Heart left ventricle (tissue), 16 donors: ENCODE measurements at regions of chr9 and their contacts with region 1.

Region 1: DNA sequence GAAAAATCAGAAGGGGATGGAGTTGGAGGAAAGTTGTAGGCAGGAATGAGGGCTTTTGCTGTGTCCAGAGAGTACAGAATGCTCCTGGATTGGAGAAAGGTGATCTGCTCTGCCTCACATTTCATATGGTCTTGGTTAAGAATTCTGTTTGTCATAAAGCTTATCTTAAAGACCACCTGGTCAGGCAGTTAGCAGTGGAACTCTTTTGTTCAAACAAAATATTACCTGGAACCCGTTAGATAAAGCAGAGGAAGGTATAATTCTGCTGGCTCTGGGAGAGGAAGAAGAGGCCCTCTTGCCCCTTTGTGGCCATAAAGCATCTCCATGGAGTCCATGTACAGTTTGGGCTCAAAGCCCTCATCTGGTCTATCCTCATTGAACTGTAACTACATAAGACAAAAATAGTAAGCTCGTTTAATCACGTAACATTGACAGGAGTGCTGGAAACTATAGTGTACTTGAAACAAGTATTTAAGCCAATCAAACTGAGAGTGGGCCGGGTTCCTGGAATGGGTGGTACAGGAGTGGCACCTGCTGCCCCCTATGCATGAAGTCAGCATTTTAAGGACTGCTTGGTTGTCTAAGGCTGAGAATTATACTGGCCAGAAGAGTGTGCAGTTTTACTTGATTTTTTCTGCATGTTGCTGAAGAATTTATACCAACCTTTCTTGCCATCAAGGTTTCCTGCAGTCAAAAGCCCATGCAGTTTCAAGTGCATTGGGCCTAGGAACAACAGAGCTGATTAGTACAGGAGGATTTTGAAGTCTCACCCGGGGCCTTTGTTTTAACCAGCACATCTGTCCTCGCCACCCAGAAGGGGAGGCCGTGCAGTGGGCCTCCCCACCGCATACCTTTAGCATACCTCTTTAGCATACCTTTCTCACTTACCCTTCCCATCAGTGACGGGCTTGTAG is 39.9 kb downstream of the STXBP1 start:
- DNase-seq: no peak
- ATAC-seq: peak in 3 of 4 donors; percentile 28 to 82 (median 37)
- H3K4me3 ChIP-seq: no peak overlapping the region
- H3K27ac ChIP-seq: peak overlapping the region in 1 of 12 donors; percentile 4
- H3K4me1 ChIP-seq: peaks cover 0 to 10% (median 1%) of the 10 kb centered on the region in 12 donors
- H3K27me3 ChIP-seq: no peaks in the 10 kb centered on the region
- CTCF ChIP-seq: no peak
- POLR2A ChIP-seq: no peak

Region 2: GRCh38 chr9:127004946-127005769 is 646.8 kb before region 1 on chr9:
- intact Hi-C with region 1: no loop called
- DNase-seq: no peak
- ATAC-seq: peak in 3 of 4 donors; percentile 30 to 60 (median 59)
- H3K4me3 ChIP-seq: no peak overlapping the region
- H3K27ac ChIP-seq: peak overlapping the region in 1 of 12 donors; percentile 44
- H3K4me1 ChIP-seq: peaks cover 0 to 16% (median 9%) of the 10 kb centered on the region in 12 donors
- H3K27me3 ChIP-seq: no peaks in the 10 kb centered on the region
- CTCF ChIP-seq: no peak
- POLR2A ChIP-seq: no peak

Region 3: GRCh38 chr9:127568971-127569885 is 82.7 kb before region 1 on chr9:
- intact Hi-C with region 1: no loop called
- DNase-seq: peak; percentile 80 to 92 (median 87)
- ATAC-seq: peak; percentile 79 to 92 (median 90)
- H3K4me3 ChIP-seq: peak overlapping the region; percentile 69 to 99 (median 82)
- H3K27ac ChIP-seq: peak overlapping the region; percentile 87 to 96 (median 90)
- H3K4me1 ChIP-seq: peaks cover 0 to 66% (median 37%) of the 10 kb centered on the region in 12 donors
- H3K27me3 ChIP-seq: no peaks in the 10 kb centered on the region
- CTCF ChIP-seq: no peak
- POLR2A ChIP-seq: peak in 1 of 2 donors; percentile 60

Region 4: GRCh38 chr9:127611899-127612790 is 39.8 kb before region 1 on chr9 and contains the start of gene STXBP1:
- intact Hi-C with region 1: loop called in 1 of 10 experiments (anchors 10 kb)
- DNase-seq: peak; percentile 90 to 95 (median 92)
- ATAC-seq: peak; percentile 71 to 90 (median 86)
- H3K4me3 ChIP-seq: peak within 1 kb of the TSS; percentile 68 to 99 (median 93)
- H3K27ac ChIP-seq: peak within 1 kb of the TSS; percentile 85 to 98 (median 94)
- H3K4me1 ChIP-seq: peaks cover 0 to 47% (median 35%) of the 10 kb centered on the region in 12 donors
- H3K27me3 ChIP-seq: peaks cover 0 to 5% (median 0%) of the 10 kb centered on the region in 9 donors
- CTCF ChIP-seq: peak in 6 of 12 donors; percentile 9 to 50 (median 27)
- POLR2A ChIP-seq: peak in 1 of 2 donors; percentile 91
- total RNA-seq, gene STXBP1: 35.9 to 102 (median 50.2) TPM

Region 5: DNA sequence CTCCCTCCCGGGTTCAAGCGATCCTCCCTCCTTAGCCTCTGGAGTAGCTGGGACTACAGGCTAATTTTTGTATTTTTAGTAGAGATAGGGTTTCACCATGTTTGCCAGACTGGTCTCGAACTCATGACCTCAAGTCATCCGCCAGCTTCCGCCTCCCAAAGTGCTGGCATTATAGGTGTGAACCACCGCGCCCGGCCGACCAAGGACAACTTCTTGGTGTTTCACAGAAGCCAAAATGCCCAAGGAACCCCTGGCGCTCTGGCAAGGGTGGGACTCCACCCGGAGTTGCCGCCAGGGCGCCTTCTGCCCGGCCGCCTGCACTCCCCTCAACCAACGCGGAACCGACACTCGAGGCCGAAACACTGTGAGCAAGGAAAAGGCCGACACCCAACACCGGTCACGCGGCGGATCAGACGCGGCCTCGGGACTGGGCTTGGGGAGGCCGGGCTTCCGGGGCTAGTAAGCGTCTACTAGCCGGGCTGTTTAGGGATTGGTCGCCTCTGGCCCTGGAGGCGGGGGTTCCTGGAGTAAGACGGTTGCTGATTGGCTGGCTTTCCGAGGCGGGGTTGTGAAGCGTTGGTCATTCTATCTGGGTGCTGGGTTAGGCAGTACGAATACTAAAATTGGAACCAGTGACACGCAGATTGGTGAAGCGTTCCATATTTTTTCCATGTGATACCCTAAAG is 47.2 kb after region 1 on chr9:
- intact Hi-C with region 1: loop called in 1 of 10 experiments (anchors 5 kb)
- DNase-seq: peak; percentile 97 to 99 (median 98)
- ATAC-seq: peak; percentile 99
- H3K4me3 ChIP-seq: peak overlapping the region in 9 of 12 donors; percentile 23 to 49 (median 38)
- H3K27ac ChIP-seq: peak overlapping the region; percentile 26 to 92 (median 87)
- H3K4me1 ChIP-seq: peaks cover 0 to 14% (median 8%) of the 10 kb centered on the region in 12 donors
- H3K27me3 ChIP-seq: no peaks in the 10 kb centered on the region
- CTCF ChIP-seq: peak in 4 of 12 donors; percentile 16 to 29 (median 24)
- POLR2A ChIP-seq: peak in 1 of 2 donors; percentile 67

Region 6: GRCh38 chr9:127715394-127716337 is 63.7 kb after region 1 on chr9 and contains the starts of genes PTRH1 and TTC16:
- intact Hi-C with region 1: no loop called
- DNase-seq: peak; percentile 98 to 99 (median 98)
- ATAC-seq: peak; percentile 96 to 98 (median 96)
- H3K4me3 ChIP-seq: peak within 1 kb of the TSS; percentile 58 to 91 (median 71)
- H3K27ac ChIP-seq: peak within 1 kb of the TSS in 11 of 12 donors; percentile 64 to 91 (median 82)
- H3K4me1 ChIP-seq: peaks cover 0 to 26% (median 13%) of the 10 kb centered on the region in 12 donors
- H3K27me3 ChIP-seq: no peaks in the 10 kb centered on the region
- CTCF ChIP-seq: no peak
- POLR2A ChIP-seq: peak in 1 of 2 donors; percentile 65
- total RNA-seq, gene PTRH1: 7.3 to 30.5 (median 13.5) TPM
- total RNA-seq, gene TTC16: 0.09 to 0.61 (median 0.24) TPM in 8 of 9 donors, not detected in the other

Region 7: GRCh38 chr9:127937388-127938280 is 285.7 kb after region 1 on chr9 and contains the start of gene DPM2:
- intact Hi-C with region 1: loop called in 1 of 10 experiments (anchors 5 kb)
- DNase-seq: peak; percentile 84 to 91 (median 88)
- ATAC-seq: peak; percentile 85 to 94 (median 89)
- H3K4me3 ChIP-seq: peak within 1 kb of the TSS; percentile 43 to 93 (median 78)
- H3K27ac ChIP-seq: peak within 1 kb of the TSS in 11 of 12 donors; percentile 43 to 80 (median 74)
- H3K4me1 ChIP-seq: peaks cover 6 to 37% (median 29%) of the 10 kb centered on the region in 12 donors
- H3K27me3 ChIP-seq: no peaks in the 10 kb centered on the region
- CTCF ChIP-seq: no peak
- POLR2A ChIP-seq: peak in 1 of 2 donors; percentile 68
- total RNA-seq, gene DPM2: 7.2 to 19.5 (median 11.7) TPM